ENCODE measurements at regions of chr15 and their contacts with region 1.

Region 1: DNA sequence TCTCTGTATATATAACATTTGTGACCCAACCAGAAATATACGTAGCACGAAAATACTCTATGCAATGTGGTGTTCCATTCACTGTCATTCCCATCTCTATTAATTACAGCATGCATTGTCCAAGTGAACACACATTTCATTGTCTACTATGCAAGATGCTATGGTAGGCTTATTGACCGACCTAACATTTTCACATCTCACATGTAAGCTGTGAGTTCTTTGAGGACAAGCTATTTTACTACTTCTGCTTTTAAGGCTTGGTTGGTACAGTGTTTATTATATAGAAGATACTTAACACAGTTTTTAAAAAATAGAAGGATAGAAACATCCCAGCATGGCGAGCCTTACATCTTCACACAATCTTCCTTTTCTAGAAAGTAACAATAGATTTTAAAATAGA is 164.4 kb downstream of the KLHL25 start:
- DNase-seq: no peak
- H3K27ac ChIP-seq: no peak overlapping the region
- CTCF ChIP-seq: no peak

Region 2: GRCh38 chr15:85515212-85515611 is 115.1 kb before region 1 on chr15:
- CTCF ChIA-PET with region 1: no interaction called
- POLR2A ChIA-PET with region 1: no interaction called
- DNase-seq: no peak
- H3K27ac ChIP-seq: no peak overlapping the region
- CTCF ChIP-seq: no peak

Region 3: DNA sequence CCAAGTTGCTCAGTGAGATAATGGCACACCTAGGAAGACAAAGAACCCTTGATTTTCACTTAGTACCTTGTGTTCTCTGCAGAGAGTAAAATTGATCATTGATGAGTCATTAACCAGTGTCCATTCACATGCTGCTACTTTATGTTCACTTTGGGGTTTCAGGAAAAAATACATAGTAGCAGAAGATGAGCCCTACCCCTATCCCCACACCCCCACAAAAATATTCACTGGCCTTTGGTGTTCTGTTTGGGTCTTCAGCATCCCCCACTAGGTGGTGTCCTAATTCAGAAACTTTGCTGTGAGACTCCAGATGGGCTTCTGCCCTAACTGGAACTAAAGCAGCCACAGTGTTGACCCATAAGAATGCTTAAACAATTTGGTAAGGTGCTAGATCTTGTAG is 14.4 kb before region 1 on chr15:
- CTCF ChIA-PET with region 1: no interaction called
- POLR2A ChIA-PET with region 1: interaction called, 17 read pairs
- DNase-seq: peak; percentile 13
- H3K27ac ChIP-seq: no peak overlapping the region
- CTCF ChIP-seq: no peak; the same call in 1 of the 2 replicates

Region 4: GRCh38 chr15:85750319-85750806 is 120.1 kb after region 1 on chr15:
- CTCF ChIA-PET with region 1: no interaction called
- POLR2A ChIA-PET with region 1: no interaction called
- DNase-seq: no peak
- H3K27ac ChIP-seq: peak overlapping the region; percentile 78
- CTCF ChIP-seq: no peak